Endothelial cell of umbilical vein (primary cell): ENCODE measurements at regions of chr15 and their contacts with region 1.

Region 1: DNA sequence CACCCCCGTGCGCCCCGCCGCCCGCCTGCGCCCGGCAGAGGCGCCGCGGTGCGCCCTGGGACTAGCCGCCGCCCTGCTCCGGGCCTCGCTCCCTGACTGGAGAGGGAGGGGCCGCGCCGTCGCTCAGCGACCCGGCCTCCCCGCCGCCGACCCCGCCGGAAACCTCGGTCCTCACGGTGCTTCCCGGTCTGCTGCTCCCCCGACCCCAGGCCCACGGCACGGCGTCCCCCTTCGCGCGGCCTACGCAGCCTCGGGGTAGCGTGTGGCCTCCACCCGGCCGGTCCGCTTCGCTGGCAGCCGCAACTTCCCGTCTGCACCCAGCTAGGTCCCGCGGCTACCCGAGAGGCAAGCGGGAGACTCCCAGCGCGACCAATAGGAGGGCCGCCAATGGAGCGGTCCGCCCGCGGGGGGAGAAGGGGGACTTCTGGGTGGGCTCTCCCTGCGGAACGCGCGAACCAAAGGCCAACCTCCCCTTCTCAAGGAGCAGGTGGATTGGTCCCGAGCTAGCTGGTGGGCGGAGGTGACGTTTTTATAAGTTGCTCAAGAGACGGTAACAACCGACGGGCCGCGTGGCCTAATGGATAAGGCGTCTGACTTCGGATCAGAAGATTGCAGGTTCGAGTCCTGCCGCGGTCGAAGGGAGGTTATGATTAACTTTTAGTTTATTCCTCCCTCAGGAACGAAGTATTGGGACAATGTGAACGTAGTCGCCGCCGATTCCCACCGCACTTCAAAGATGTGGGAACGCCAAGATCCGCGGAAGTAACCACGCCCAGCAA is at the start of gene POLG:
- DNase-seq: peak; percentile 99
- H3K4me3 ChIP-seq: peak within 1 kb of the TSS; percentile 40 to 91 (median 71)
- H3K27ac ChIP-seq: peak within 1 kb of the TSS; percentile 11
- H3K4me1 ChIP-seq: peaks cover 28% of the 10 kb centered on the region
- H3K27me3 ChIP-seq: peaks cover 0 to 6% of the 10 kb centered on the region in 2 experiments
- CTCF ChIP-seq: no peak
- POLR2A ChIP-seq: peak; percentile 96
- total RNA-seq, gene POLG: 77.7 and 79.4 TPM in 2 replicates

Region 2: DNA sequence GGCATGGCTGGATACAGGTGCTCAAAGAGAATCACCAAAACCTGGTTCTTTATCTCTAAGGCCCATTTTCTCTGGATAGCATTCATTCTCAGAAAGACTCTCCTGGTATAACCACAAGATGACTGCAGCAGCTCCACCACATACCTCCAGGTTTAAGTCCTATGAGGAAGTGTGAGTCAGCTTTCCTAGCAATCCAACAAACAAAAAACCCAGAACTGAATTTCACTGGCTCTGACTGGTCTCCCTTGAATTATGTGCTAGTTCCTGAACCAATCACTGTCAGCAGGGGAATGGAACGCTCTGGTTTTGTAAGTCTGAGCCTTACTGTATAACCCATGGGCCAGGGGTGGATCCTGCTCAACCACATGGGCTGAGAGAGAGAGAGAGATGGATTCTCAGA is 894.7 kb before region 1 on chr15:
- CTCF ChIA-PET with region 1: no interaction called
- POLR2A ChIA-PET with region 1: no interaction called
- dilution Hi-C with region 1: no loop called
- intact Hi-C with region 1: no loop called
- DNase-seq: peak; percentile 8
- H3K4me3 ChIP-seq: no peak overlapping the region
- H3K27ac ChIP-seq: no peak overlapping the region
- H3K4me1 ChIP-seq: no peaks in the 10 kb centered on the region
- H3K27me3 ChIP-seq: peaks cover 2 to 7% of the 10 kb centered on the region in 2 experiments
- CTCF ChIP-seq: no peak
- POLR2A ChIP-seq: no peak

Region 3: GRCh38 chr15:89315375-89315929 is 19.2 kb before region 1 on chr15:
- CTCF ChIA-PET with region 1: interaction called, 6 read pairs
- POLR2A ChIA-PET with region 1: interaction called, 3 read pairs
- dilution Hi-C with region 1: no loop called
- intact Hi-C with region 1: loop called (anchors 2 kb)
- DNase-seq: peak; percentile 28
- H3K4me3 ChIP-seq: no peak overlapping the region
- H3K27ac ChIP-seq: peak overlapping the region; percentile 5
- H3K4me1 ChIP-seq: peaks cover 27% of the 10 kb centered on the region
- H3K27me3 ChIP-seq: no peaks in the 10 kb centered on the region
- CTCF ChIP-seq: no peak
- POLR2A ChIP-seq: peak; percentile 25

Region 4: GRCh38 chr15:89321521-89322410 is 12.9 kb before region 1 on chr15:
- CTCF ChIA-PET with region 1: interaction called, 15 read pairs
- POLR2A ChIA-PET with region 1: no interaction called
- dilution Hi-C with region 1: no loop called
- intact Hi-C with region 1: no loop called
- DNase-seq: no peak
- H3K4me3 ChIP-seq: no peak overlapping the region
- H3K27ac ChIP-seq: no peak overlapping the region
- H3K4me1 ChIP-seq: peaks cover 10% of the 10 kb centered on the region
- H3K27me3 ChIP-seq: no peaks in the 10 kb centered on the region
- CTCF ChIP-seq: no peak
- POLR2A ChIP-seq: no peak

Region 5: GRCh38 chr15:89346516-89347231 is 12.0 kb after region 1 on chr15:
- CTCF ChIA-PET with region 1: no interaction called
- POLR2A ChIA-PET with region 1: no interaction called
- dilution Hi-C with region 1: no loop called
- intact Hi-C with region 1: no loop called
- DNase-seq: no peak
- H3K4me3 ChIP-seq: no peak overlapping the region
- H3K27ac ChIP-seq: no peak overlapping the region
- H3K4me1 ChIP-seq: no peaks in the 10 kb centered on the region
- H3K27me3 ChIP-seq: peaks cover 6 to 7% of the 10 kb centered on the region in 2 experiments
- CTCF ChIP-seq: no peak
- POLR2A ChIP-seq: no peak

Region 6: DNA sequence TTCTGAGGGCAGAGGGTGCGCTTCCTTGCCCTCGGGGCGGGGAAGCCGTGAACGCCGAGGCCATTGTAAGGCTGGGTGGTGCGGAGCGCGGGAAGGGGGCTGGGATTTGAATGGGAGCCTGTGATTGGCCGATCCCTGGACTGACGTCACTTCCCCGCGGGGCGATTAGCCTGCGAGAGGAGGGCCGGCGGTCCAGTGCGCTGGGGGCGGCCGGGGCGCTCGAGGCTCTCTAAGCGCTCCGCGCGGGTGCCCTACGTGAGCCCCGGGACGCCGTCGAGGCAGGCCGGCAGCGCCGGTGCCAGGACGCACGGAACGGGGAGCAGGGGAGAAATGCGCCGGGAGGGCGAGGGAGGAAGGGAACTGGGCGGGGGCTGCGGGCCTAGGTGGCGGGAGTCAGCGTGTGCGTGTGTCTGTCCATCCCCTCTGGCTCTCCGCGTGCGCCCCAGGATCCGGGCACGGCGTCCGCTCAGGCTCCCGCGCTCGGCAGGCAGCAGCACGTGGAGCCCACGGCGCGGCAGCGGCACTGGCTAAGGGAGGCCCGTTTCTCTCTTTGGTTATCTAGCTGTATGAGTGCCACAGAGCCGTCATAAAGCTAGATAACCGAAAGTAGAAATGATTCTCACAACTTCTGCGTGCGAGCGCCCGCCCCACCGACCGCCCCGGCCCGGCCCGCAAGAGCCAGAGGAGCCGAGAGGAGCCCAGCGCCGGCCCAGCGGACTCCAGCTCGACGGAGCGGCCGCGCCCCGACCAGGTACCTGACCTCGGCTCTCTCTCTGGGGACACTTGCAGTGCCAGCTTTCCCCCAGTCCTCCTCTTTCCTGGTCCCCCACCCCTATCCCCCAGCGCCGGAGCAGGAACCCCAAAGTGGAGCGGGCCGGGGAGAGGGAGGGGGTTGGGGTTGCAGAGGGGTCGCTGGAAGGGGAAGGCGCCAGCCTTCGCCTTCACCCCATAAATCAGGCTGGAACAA is 33.1 kb after region 1 on chr15:
- CTCF ChIA-PET with region 1: no interaction called
- POLR2A ChIA-PET with region 1: no interaction called
- dilution Hi-C with region 1: no loop called
- intact Hi-C with region 1: no loop called
- DNase-seq: no peak
- H3K4me3 ChIP-seq: no peak overlapping the region
- H3K27ac ChIP-seq: no peak overlapping the region
- H3K4me1 ChIP-seq: no peaks in the 10 kb centered on the region
- H3K27me3 ChIP-seq: peaks cover 92 to 98% of the 10 kb centered on the region in 2 experiments
- CTCF ChIP-seq: no peak
- POLR2A ChIP-seq: no peak

Region 7: DNA sequence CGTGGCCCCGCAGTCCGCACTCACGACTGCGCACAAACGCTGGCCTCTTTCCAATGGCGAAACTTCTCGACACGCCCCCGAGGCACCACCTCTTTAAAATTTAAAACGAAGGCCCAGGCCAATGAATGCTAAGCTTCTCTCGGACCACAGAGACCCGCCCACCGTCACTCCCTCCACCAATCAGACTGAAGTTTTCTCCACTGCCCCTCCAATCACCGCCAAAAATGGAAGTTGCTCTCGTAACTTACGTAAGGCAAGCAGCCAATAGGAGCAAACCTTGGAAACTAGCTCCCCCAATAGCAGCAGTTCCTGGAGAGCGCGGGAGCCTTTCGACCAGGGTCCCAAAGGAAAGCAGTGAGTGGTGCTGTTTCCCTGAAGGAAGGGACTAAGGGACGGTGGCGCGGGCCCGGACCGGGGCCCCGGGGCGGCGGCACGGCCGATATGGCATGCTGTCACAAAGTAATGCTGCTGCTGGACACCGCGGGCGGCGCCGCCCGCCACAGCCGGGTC is 240.5 kb after region 1 on chr15 and contains the start of gene TICRR:
- CTCF ChIA-PET with region 1: no interaction called
- POLR2A ChIA-PET with region 1: no interaction called
- dilution Hi-C with region 1: no loop called
- intact Hi-C with region 1: loop called (anchors 1 kb)
- DNase-seq: peak; percentile 100
- H3K4me3 ChIP-seq: peak within 1 kb of the TSS; percentile 52 to 84 (median 65)
- H3K27ac ChIP-seq: peak within 1 kb of the TSS; percentile 7
- H3K4me1 ChIP-seq: peaks cover 18% of the 10 kb centered on the region
- H3K27me3 ChIP-seq: peaks cover 6 to 7% of the 10 kb centered on the region in 2 experiments
- CTCF ChIP-seq: no peak
- POLR2A ChIP-seq: no peak
- total RNA-seq, gene TICRR: 19.4 and 20.5 TPM in 2 replicates